Left lung (tissue), 14 donors: ENCODE measurements at regions of chr5 and their contacts with region 1.

Region 1: GRCh38 chr5:142548739-142549275 is 137.1 kb downstream of the FGF1 start:
- DNase-seq: peak in 3 of 4 donors; percentile 36 to 84 (median 60)
- ATAC-seq: peak; percentile 99
- H3K4me3 ChIP-seq: no peak overlapping the region
- H3K27ac ChIP-seq: no peak overlapping the region
- H3K4me1 ChIP-seq: peaks cover 0 to 6% of the 10 kb centered on the region in 2 donors
- H3K27me3 ChIP-seq: peaks cover 0 to 32% of the 10 kb centered on the region in 2 donors
- CTCF ChIP-seq: peak; percentile 63 to 64

Region 2: GRCh38 chr5:142151436-142152383 is 397.1 kb before region 1 on chr5:
- intact Hi-C with region 1: loop called in 1 of 2 experiments (anchors 5 kb)
- DNase-seq: peak in 2 of 4 donors; percentile 62 to 84
- ATAC-seq: peak; percentile 93
- H3K4me3 ChIP-seq: no peak overlapping the region
- H3K27ac ChIP-seq: no peak overlapping the region
- H3K4me1 ChIP-seq: peaks cover 0 to 6% of the 10 kb centered on the region in 2 donors
- H3K27me3 ChIP-seq: no peaks in the 10 kb centered on the region
- CTCF ChIP-seq: peak; percentile 71

Region 3: DNA sequence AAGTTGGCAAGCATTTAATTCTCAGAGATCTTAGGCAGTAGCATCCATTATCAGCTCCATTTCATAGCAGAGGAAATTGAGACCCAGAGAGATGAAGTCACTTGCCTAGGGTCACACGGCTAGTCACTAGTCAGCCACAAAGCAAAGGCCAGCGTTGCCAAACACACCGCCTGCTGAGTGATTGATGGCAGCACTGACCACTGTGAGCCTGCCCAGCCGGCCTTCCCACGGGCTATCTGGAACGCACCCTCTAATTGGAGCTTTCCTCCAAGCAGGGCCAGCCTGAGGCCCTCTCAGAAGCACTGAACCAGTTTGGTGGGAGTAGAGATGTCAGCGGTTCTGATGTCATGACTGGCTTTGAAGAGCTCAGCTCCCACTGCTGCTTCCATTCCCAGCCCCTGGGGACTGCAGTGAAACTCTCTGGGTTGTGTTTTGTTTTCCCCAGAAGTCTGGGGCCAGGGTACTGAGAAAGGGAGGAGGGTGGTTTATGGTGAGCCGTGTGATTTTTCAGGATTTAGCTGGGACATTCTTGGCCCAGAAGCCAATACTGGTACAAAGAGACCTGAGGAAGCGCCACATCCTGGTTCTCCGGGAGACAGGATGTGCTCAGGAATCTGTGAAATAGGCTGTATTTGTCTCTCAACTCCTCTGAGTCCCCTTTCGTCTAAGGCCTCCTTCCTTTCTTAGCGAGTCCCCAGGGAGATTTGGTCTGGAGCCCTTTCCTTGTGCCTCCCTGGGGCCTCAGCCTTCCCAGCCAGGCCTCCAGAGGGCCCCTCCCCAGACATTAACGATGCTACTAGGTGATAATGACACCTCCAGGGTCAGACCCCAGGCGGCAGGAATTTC is 268.5 kb before region 1 on chr5:
- intact Hi-C with region 1: no loop called
- DNase-seq: peak in 1 of 4 donors; percentile 51
- ATAC-seq: peak; percentile 53
- H3K4me3 ChIP-seq: no peak overlapping the region
- H3K27ac ChIP-seq: peak overlapping the region in 1 of 2 donors; percentile 55
- H3K4me1 ChIP-seq: no peaks in the 10 kb centered on the region
- H3K27me3 ChIP-seq: no peaks in the 10 kb centered on the region
- CTCF ChIP-seq: no peak